ENCODE measurements at regions of chr11 and their contacts with region 1.

Region 1: GRCh38 chr11:92552942-92553341 is 328.3 kb downstream of the FAT3 start:
- DNase-seq: peak; percentile 2
- ATAC-seq: no peak
- H3K4me3 ChIP-seq: no peak overlapping the region
- H3K27ac ChIP-seq: no peak overlapping the region
- H3K4me1 ChIP-seq: no peaks in the 10 kb centered on the region
- H3K27me3 ChIP-seq: no peaks in the 10 kb centered on the region
- CTCF ChIP-seq: peak; percentile 37
- EP300 ChIP-seq: no peak
- POLR2A ChIP-seq: no peak
- RAD21 ChIP-seq: no peak

Region 2: GRCh38 chr11:92340839-92341238 is 212.1 kb before region 1 on chr11:
- CTCF ChIA-PET with region 1: no interaction called
- POLR2A ChIA-PET with region 1: no interaction called
- in situ Hi-C with region 1: no loop called
- intact Hi-C with region 1: loop called (anchors 2 kb)
- DNase-seq: peak; percentile 6
- ATAC-seq: peak; percentile 86
- H3K4me3 ChIP-seq: no peak overlapping the region
- H3K27ac ChIP-seq: no peak overlapping the region
- H3K4me1 ChIP-seq: no peaks in the 10 kb centered on the region
- H3K27me3 ChIP-seq: no peaks in the 10 kb centered on the region
- CTCF ChIP-seq: peak; percentile 56
- EP300 ChIP-seq: no peak
- POLR2A ChIP-seq: no peak
- RAD21 ChIP-seq: no peak

Measured in HepG2 (cell line).